ENCODE measurements at regions of chr1 and their contacts with region 1.

Region 1: GRCh38 chr1:21659099-21659923 is 9.8 kb downstream of the RAP1GAP start:
- DNase-seq: peak; percentile 60 to 94
- H3K4me3 ChIP-seq: no peak overlapping the region
- CTCF ChIP-seq: peak in 1 of 3 donors; percentile 46
- POLR2A ChIP-seq: no peak

Region 2: GRCh38 chr1:21232044-21232443 is 427.3 kb before region 1 on chr1:
- intact Hi-C with region 1: loop called (anchors 5 kb)
- DNase-seq: peak in 1 of 2 donors; percentile 53
- H3K4me3 ChIP-seq: no peak overlapping the region
- CTCF ChIP-seq: peak in 1 of 3 donors; percentile 64
- POLR2A ChIP-seq: no peak

Region 3: GRCh38 chr1:21511579-21512522 is 147.5 kb before region 1 on chr1:
- intact Hi-C with region 1: loop called (anchors 10 kb)
- DNase-seq: peak; percentile 69 to 92
- H3K4me3 ChIP-seq: no peak overlapping the region
- CTCF ChIP-seq: no peak
- POLR2A ChIP-seq: no peak

Measured in lower leg skin (tissue), 4 donors.